Activated CD8-positive, alpha-beta T cell treated with anti-CD3 and anti-CD28 coated beads, Interleukin-2, amount 10 ng/mL, durations not matched to agents 7 days and 5 days (primary cell): ENCODE measurements at regions of chr10 and their contacts with region 1.

Region 1: DNA sequence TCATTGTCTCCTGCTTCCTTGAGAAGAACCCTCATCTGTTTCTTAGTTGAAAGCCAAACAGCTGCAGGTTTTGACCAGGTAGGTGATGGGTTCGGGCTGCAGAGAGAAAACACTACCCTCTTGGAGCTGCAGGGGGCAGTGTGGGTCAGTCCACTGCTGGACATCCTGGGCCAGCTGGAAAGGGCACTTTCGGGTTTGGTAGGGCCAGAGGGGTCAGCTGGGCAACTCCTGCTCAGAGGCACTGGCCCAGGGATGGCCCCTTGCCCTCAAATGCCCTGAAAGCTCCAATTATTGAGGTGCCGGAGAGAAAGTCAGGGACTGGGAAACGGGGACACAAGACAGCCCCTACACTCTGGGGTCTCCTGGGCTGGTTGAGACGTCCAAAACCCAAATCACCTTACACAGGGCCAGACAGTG is 90.7 kb downstream of the MKI67 start:
- DNase-seq: peak; percentile 73
- ATAC-seq: peak; percentile 81
- H3K4me3 Mint-ChIP-seq: no peak overlapping the region
- H3K27ac Mint-ChIP-seq: no peak overlapping the region
- H3K4me1 Mint-ChIP-seq: peaks cover 11% of the 10 kb centered on the region
- H3K27me3 Mint-ChIP-seq: no peaks in the 10 kb centered on the region

Region 2: DNA sequence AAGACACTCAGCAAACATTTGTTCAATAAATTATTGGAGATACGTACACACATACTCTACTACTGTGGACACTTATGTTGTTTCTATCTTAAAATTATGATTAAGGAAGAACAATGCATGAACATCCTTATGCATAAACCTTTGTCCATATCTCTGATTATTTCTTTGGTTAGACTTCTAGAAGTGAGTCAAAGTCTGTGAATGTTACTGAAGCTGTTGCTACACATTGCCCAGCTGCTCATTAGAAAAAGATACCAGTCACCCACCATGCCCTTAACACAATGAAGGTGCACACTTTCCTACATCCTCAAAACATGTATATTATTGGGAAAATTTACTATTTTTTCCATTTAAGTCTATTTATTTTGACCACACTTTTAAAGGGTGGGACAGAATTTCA is 141.4 kb before region 1 on chr10:
- CTCF ChIA-PET with region 1: no interaction called
- POLR2A ChIA-PET with region 1: no interaction called
- DNase-seq: no peak
- ATAC-seq: no peak
- H3K4me3 Mint-ChIP-seq: no peak overlapping the region
- H3K27ac Mint-ChIP-seq: no peak overlapping the region
- H3K4me1 Mint-ChIP-seq: peaks cover 3% of the 10 kb centered on the region
- H3K27me3 Mint-ChIP-seq: peaks cover 25% of the 10 kb centered on the region

Region 3: DNA sequence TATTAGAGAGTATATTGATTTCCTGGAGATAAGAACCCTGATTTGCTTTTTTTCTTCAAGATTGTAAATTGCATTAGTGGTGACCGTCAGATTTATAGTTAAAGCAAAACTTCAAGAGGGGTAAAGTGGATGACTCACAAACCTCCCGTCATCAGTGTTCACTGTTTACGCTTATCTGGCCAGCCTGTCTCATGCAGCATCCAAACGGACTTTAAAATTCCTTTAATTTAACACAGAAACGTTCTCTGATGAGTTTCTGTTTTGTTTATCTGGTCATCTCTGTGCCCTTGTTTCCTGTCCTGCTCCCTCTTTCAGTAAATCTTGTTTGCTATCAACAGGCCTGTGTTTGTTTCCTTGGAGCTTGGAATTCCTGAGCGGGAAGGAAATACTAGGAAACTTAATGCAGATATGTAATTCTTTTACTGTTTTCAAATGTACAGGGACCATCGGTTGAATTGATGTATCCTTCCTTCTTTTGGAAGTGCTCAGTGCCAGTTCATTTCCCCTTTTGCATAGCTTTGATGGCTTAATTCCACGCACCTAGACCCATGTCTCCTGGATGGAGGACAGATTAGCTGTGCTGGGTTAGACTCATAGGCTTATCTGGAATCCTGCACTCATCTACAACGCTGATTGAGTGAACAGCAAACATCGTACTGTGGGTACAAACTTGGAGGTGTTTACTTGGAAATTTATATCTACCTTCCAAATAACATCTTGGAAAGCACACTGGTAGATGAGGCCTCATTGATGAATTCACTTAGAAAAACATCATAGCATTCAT is 107.3 kb before region 1 on chr10:
- CTCF ChIA-PET with region 1: no interaction called
- POLR2A ChIA-PET with region 1: no interaction called
- DNase-seq: no peak
- ATAC-seq: no peak
- H3K4me3 Mint-ChIP-seq: no peak overlapping the region
- H3K27ac Mint-ChIP-seq: no peak overlapping the region
- H3K4me1 Mint-ChIP-seq: peaks cover 8% of the 10 kb centered on the region
- H3K27me3 Mint-ChIP-seq: peaks cover 2% of the 10 kb centered on the region

Region 4: DNA sequence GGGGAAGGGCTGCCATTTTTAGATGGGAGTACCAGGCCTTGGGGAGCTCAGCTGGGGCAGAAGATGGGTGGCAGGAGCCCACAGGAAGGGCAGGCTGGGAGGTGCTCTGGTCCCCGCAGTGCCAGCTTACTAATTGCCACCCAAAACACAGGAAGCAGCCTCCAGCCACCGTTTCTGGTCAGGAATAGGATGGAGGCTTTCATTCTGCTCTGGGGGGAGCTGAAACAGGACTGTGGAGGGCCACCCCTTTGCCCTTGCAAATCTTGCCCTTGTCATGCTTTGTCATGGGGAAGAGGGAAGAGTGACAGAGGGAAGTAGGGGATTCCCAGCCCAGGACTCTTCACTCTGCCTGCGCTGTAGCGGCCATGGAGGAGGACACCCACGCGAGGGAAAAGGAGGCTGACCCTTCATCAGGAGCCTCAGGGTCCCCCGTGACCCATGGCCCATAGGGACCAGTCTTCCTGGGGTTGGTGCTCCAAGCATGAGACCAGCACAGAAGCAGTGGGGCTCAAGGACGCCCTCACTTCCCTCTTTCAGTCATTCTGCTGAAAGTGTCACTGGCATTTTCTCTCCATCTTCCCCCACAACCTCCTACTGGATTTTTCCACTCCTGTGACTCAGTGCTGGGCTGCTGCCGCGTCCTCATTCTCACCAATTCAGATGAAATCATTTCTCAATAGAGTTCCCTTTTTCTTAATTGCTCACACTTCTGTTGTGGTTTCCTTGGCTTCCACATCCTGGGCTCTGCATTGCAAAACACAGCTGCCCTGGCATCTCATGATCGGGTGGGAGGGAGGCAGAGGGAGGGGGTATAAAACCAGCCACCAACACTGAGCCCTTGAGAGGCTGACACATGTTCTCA is 28.8 kb after region 1 on chr10:
- CTCF ChIA-PET with region 1: interaction called, 181 read pairs
- POLR2A ChIA-PET with region 1: interaction called, 4 read pairs
- DNase-seq: peak; percentile 81
- ATAC-seq: peak; percentile 54
- H3K4me3 Mint-ChIP-seq: peak overlapping the region; percentile 78
- H3K27ac Mint-ChIP-seq: peak overlapping the region; percentile 85
- H3K4me1 Mint-ChIP-seq: peaks cover 78% of the 10 kb centered on the region
- H3K27me3 Mint-ChIP-seq: no peaks in the 10 kb centered on the region